ENCODE measurements at regions of chr4 and their contacts with region 1.

Region 1: GRCh38 chr4:116358588-116359222 is 726.7 kb downstream of the TRAM1L1 start:
- H3K4me3 Mint-ChIP-seq: no peak overlapping the region
- H3K27ac Mint-ChIP-seq: no peak overlapping the region
- H3K4me1 Mint-ChIP-seq: no peaks in the 10 kb centered on the region
- H3K27me3 Mint-ChIP-seq: no peaks in the 10 kb centered on the region

Region 2: GRCh38 chr4:116202524-116202923 is 156.2 kb before region 1 on chr4:
- intact Hi-C with region 1: no loop called
- H3K4me3 Mint-ChIP-seq: no peak overlapping the region
- H3K27ac Mint-ChIP-seq: no peak overlapping the region
- H3K4me1 Mint-ChIP-seq: no peaks in the 10 kb centered on the region
- H3K27me3 Mint-ChIP-seq: no peaks in the 10 kb centered on the region

Region 3: GRCh38 chr4:118034053-118034785 is 1675.5 kb after region 1 on chr4 and contains the start of gene NDST3:
- intact Hi-C with region 1: loop called (anchors 5 kb)
- H3K4me3 Mint-ChIP-seq: peak within 1 kb of the TSS; percentile 51
- H3K27ac Mint-ChIP-seq: no peak within 1 kb of the TSS
- H3K4me1 Mint-ChIP-seq: peaks cover 13% of the 10 kb centered on the region
- H3K27me3 Mint-ChIP-seq: peaks cover 29% of the 10 kb centered on the region

Region 4: DNA sequence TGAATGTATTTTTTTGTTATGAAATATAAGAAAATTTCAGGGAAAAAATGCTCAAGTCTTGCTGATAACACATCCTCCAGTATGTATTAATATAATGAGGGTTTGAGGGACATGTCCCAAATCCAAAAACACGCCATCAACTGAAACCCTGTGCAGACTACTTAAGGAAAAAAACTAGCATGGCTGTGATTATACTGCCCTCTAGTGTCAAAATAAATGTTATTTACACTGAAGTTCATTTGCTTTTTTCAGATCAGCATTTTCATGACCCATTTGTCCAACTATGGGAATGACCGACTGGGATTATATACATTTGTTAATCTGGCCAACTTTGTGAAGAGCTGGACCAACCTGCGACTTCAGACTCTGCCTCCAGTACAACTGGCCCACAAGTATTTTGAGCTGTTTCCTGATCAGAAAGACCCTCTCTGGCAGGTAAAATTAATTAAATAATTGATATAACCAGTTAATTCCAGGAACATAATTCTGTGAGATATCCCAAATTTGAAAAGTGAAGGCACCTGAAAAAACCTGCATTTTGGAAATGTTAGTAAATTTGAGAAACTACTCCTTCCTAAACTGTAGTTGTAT is 1865.6 kb after region 1 on chr4:
- intact Hi-C with region 1: loop called (anchors 2 kb)
- H3K4me3 Mint-ChIP-seq: no peak overlapping the region
- H3K27ac Mint-ChIP-seq: no peak overlapping the region
- H3K4me1 Mint-ChIP-seq: no peaks in the 10 kb centered on the region
- H3K27me3 Mint-ChIP-seq: no peaks in the 10 kb centered on the region

Measured in dendritic cell treated with granulocyte-macrophage colony-stimulating factor and Interleukin-4, amounts not matched to agents 40 ng/mL and 50 ng/mL, for 4 days (primary cell).